H1 (cell line): ENCODE measurements at regions of chr16 and their contacts with region 1.

Region 1: DNA sequence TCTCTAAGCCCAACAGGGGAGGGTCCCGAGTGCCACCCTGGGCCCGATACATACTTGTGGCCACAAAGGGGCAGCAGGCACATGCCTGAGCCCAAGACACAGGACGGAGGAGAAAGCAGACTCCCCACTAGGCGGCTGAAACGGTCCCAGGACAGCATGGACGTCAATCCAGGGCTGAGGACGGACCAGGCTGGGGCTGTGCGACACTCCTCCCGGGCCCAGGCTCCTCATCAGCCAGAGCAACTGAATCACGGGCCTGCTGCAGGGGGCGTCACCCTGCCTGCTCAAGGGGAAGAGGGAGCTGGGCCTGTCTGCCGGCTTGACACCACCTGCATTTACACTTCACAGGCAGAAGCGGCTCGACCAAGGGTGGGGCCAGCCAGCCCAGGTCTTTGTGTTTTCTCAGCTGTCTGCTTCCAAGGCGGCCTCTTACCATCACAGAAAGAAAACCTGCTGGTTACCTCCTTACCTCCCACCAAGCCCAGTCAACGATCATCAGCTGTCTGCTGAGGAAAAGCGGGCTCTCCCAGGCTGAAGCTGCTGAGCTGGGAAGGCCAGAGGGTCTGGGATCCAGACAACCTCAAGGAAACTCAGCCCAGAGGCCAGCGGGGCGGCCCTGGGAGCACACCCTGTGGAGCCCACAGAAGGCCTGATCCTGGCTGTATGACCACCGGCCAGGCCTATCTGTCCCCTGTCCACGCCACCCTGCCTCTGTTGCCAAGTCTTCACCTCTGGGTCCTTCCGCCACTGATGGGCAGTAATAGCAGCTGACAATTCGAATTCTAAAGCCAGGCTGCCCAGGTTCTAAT is 26.4 kb downstream of the KIFC3 start:
- DNase-seq: peak; percentile 84 to 94
- H3K4me3 ChIP-seq: peak overlapping the region in 1 of 4 experiments; percentile 16; a peak in 3 of 8 replicates
- H3K27ac ChIP-seq: no peak overlapping the region
- H3K4me1 ChIP-seq: peaks cover 6 to 19% (median 17%) of the 10 kb centered on the region in 4 experiments
- H3K27me3 ChIP-seq: peaks cover 0 to 4% (median 1%) of the 10 kb centered on the region in 4 experiments; a peak in 3 of 7 replicates
- CTCF ChIP-seq: peak; percentile 74 to 99 (median 91)
- EP300 ChIP-seq: peak in 1 of 2 experiments; percentile 53; a peak in 1 of 3 replicates
- POLR2A ChIP-seq: no peak
- RAD21 ChIP-seq: peak; percentile 89 to 91

Region 2: DNA sequence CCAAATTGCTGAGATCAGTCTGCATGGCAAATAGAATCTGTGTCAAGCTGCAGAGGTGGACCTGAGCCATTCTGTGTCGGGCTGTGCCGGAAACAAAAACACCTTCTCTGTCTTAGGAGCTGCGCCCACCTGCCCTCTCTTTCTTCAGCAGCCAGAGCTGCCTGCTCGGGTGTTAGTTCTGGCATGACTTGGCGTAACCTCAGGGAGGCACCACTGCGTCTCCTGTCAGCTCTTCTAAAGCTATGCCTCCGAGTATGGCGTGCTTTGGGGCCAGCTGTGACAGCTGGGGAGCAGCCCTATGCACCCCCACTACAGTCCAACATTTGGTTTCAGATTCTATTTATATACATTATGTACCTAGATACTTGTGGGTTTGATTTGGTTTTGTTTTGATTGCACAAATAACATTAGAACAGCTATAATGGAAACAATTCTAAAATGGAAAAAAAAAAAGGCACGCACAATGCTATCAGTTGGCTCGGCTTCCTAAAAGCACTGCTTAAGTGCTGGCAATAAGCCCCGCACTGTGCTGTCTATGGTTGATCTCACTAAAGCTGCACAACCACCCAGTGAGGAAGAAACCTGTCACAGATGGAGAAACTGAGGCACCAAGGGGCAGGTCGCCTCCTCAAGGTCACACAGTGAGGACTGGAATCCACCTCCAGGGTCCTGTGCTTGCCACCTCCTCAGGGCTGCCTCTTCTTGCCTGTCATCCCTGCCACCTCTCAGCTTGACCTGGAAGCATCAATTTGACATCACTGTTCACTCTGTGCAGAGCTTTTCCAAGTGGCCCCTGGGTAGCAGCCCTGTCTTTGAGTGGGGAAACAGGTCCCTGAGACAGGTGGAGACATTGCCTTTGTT is 166.1 kb before region 1 on chr16:
- CTCF ChIA-PET with region 1: no interaction called
- POLR2A ChIA-PET with region 1: no interaction called
- DNase-seq: peak in 1 of 2 experiments; percentile 41
- H3K4me3 ChIP-seq: no peak overlapping the region
- H3K27ac ChIP-seq: no peak overlapping the region
- H3K4me1 ChIP-seq: no peaks in the 10 kb centered on the region
- H3K27me3 ChIP-seq: 0 out of 7 replicates have a peak, but pooled peaks cover 0 to 2% (median 0%) of the 10 kb centered on the region in 4 experiments
- CTCF ChIP-seq: peak; percentile 19 to 33 (median 29)
- EP300 ChIP-seq: no peak
- POLR2A ChIP-seq: no peak
- RAD21 ChIP-seq: peak; percentile 33 to 49; a peak in 3 of 4 replicates

Region 3: GRCh38 chr16:57667526-57668258 is 108.2 kb before region 1 on chr16:
- CTCF ChIA-PET with region 1: no interaction called
- POLR2A ChIA-PET with region 1: no interaction called
- DNase-seq: peak in 1 of 2 experiments; percentile 75
- H3K4me3 ChIP-seq: no peak overlapping the region
- H3K27ac ChIP-seq: no peak overlapping the region
- H3K4me1 ChIP-seq: peaks cover 0 to 4% (median 0%) of the 10 kb centered on the region in 4 experiments; a peak in 3 of 7 replicates
- H3K27me3 ChIP-seq: no peaks in the 10 kb centered on the region
- CTCF ChIP-seq: peak; percentile 64 to 68 (median 65)
- EP300 ChIP-seq: no peak
- POLR2A ChIP-seq: no peak
- RAD21 ChIP-seq: peak; percentile 20 to 47; a peak in 3 of 4 replicates

Region 4: GRCh38 chr16:57700781-57701551 is 74.9 kb before region 1 on chr16:
- CTCF ChIA-PET with region 1: no interaction called
- POLR2A ChIA-PET with region 1: no interaction called
- DNase-seq: no peak
- H3K4me3 ChIP-seq: no peak overlapping the region
- H3K27ac ChIP-seq: no peak overlapping the region
- H3K4me1 ChIP-seq: no peaks in the 10 kb centered on the region
- H3K27me3 ChIP-seq: no peaks in the 10 kb centered on the region; a peak in 1 of 7 replicates
- CTCF ChIP-seq: no peak
- EP300 ChIP-seq: no peak
- POLR2A ChIP-seq: no peak
- RAD21 ChIP-seq: no peak

Region 5: DNA sequence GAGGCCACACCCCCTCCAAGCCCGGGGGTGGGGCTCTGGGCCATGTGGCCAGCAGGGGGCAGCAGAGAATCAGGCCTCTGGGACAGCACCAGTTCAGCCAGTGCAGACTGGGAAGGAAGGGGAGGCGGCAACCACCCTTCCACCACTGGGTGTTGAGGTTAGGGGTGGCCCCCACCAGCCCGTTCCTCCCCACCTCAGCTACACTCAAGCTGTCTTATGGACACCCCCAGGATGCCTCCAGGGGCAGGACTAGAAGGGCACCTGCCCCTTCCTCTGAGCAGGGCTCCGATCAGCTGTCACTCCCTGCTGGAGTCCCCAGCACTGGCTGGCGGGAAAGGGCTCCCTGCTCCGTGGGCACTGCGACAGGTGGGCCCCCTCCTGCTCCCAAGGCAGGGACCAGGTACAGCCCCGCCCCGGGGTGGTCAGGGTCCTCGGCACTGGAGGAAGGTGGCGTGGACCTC is 18.5 kb before region 1 on chr16:
- CTCF ChIA-PET with region 1: interaction called, 18 read pairs
- POLR2A ChIA-PET with region 1: interaction called, 6 read pairs
- DNase-seq: peak in 1 of 2 experiments; percentile 99
- H3K4me3 ChIP-seq: no peak overlapping the region
- H3K27ac ChIP-seq: no peak overlapping the region
- H3K4me1 ChIP-seq: peaks cover 0 to 12% (median 7%) of the 10 kb centered on the region in 4 experiments; a peak in 4 of 7 replicates
- H3K27me3 ChIP-seq: no peaks in the 10 kb centered on the region; a peak in 1 of 7 replicates
- CTCF ChIP-seq: peak; percentile 89 to 93 (median 91)
- EP300 ChIP-seq: no peak
- POLR2A ChIP-seq: no peak
- RAD21 ChIP-seq: peak; percentile 86 to 91

Region 6: GRCh38 chr16:57765160-57765728 is 10.6 kb before region 1 on chr16:
- CTCF ChIA-PET with region 1: interaction called, 12 read pairs
- POLR2A ChIA-PET with region 1: interaction called, 6 read pairs
- DNase-seq: no peak
- H3K4me3 ChIP-seq: no peak overlapping the region
- H3K27ac ChIP-seq: no peak overlapping the region
- H3K4me1 ChIP-seq: peaks cover 0 to 12% (median 0%) of the 10 kb centered on the region in 4 experiments; a peak in 3 of 7 replicates
- H3K27me3 ChIP-seq: no peaks in the 10 kb centered on the region; a peak in 1 of 7 replicates
- CTCF ChIP-seq: no peak
- EP300 ChIP-seq: no peak; a peak in 1 of 3 replicates
- POLR2A ChIP-seq: no peak; a peak in 1 of 3 replicates
- RAD21 ChIP-seq: no peak

Region 7: DNA sequence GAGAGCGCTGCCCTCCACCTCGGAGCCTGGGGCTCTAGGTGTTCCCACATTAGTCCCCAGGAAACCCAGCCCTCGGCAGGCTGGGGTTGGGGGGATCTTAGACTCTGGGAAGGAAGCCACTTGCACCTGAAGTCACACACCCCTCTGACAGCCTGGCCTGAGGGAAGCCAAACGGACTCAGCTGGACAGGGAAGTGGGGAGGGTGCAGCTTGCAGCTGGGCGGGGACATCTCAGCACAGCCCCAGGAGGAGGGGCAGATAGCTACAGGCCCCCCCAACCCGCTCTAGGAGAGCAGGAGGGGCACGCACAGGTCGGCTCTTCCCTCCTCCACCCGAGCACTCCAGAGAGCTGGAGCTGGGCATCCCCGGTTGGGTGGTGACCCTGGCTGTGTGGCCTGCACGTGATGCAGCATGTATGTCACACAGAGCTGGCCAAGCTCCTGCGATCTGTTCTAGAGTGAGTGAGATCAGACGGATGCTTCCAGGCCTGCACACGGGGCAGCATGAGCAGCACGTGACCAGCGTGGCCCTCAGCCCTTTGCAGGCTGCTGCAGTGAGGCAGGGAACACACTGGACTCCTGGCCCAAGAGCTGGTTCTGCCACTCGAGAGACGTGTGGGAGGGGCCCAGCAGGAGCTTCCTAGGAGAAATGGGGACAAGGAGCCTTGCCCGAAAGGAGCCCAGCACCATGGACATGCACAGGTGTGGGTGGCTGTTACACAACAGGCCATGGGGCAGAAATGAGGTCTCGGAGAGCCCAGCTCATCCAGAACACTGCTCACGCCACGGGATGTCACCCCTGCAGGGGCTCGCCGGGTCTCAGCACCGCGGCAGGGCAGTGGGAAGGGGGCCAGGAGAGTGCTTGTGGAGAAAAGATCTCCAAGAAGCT is 11.0 kb after region 1 on chr16:
- CTCF ChIA-PET with region 1: interaction called, 279 read pairs
- POLR2A ChIA-PET with region 1: interaction called, 3 read pairs
- DNase-seq: no peak
- H3K4me3 ChIP-seq: no peak overlapping the region
- H3K27ac ChIP-seq: no peak overlapping the region
- H3K4me1 ChIP-seq: peaks cover 0 to 4% (median 0%) of the 10 kb centered on the region in 4 experiments; a peak in 1 of 7 replicates
- H3K27me3 ChIP-seq: no peaks in the 10 kb centered on the region
- CTCF ChIP-seq: no peak
- EP300 ChIP-seq: no peak
- POLR2A ChIP-seq: no peak
- RAD21 ChIP-seq: no peak

Region 8: GRCh38 chr16:57802341-57803133 is 26.7 kb after region 1 on chr16 and contains the start of gene KIFC3:
- CTCF ChIA-PET with region 1: interaction called, 279 read pairs
- POLR2A ChIA-PET with region 1: interaction called, 4 read pairs
- DNase-seq: peak in 1 of 2 experiments; percentile 71
- H3K4me3 ChIP-seq: peak within 1 kb of the TSS; percentile 51 to 60 (median 59)
- H3K27ac ChIP-seq: no peak within 1 kb of the TSS
- H3K4me1 ChIP-seq: peaks cover 0 to 38% (median 28%) of the 10 kb centered on the region in 4 experiments; a peak in 6 of 7 replicates
- H3K27me3 ChIP-seq: peaks cover 0 to 33% (median 24%) of the 10 kb centered on the region in 4 experiments; a peak in 6 of 7 replicates
- CTCF ChIP-seq: peak in 1 of 3 experiments; percentile 10; a peak in 1 of 4 replicates
- EP300 ChIP-seq: no peak
- POLR2A ChIP-seq: no peak
- RAD21 ChIP-seq: no peak
- total RNA-seq, gene KIFC3: 5.3 and 7.1 TPM in 2 replicates

Region 9: DNA sequence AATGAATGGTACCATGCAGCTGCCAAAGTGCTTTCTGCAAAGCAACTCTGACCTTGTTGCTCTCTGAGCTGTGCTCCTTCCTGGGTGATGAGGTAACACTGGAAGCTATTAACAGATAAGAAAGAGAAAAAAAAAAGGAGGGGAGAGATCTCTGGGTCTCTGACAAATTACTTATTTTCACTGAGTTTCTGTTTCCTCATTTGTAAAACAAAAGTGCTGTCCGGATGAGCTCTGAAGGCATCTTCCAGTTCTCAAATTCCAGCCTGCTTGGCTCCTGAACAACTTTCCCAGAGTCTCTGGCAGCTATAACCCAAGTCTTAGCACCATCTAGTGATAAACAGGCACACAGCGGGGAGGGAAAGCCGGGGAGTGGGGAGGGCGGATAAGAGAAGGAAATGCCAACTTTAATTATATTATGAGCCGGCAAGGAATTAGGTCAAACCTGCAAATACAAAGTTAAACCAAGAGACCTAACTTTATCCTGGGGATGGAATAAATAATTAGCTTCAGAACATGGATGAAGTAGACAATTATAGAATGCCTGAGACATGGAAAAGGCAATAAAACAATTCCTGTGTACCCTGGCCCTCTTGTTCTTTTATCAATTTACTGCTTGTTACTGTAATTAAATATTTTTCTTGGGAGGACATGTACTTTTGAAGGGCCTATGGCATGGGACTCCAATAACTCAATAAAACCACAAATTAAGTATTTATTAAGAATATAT is 87.7 kb after region 1 on chr16:
- CTCF ChIA-PET with region 1: interaction called, 16 read pairs
- POLR2A ChIA-PET with region 1: no interaction called
- DNase-seq: peak in 1 of 2 experiments; percentile 49
- H3K4me3 ChIP-seq: 0 out of 8 replicates have a peak overlapping the region, but pooled peaks of 1 of the 4 experiments have one; percentile 13
- H3K27ac ChIP-seq: no peak overlapping the region
- H3K4me1 ChIP-seq: peaks cover 5 to 14% (median 8%) of the 10 kb centered on the region in 4 experiments
- H3K27me3 ChIP-seq: no peaks in the 10 kb centered on the region
- CTCF ChIP-seq: peak; percentile 33 to 65 (median 49)
- EP300 ChIP-seq: no peak
- POLR2A ChIP-seq: no peak
- RAD21 ChIP-seq: peak; percentile 70 to 80